ENCODE measurements at regions of chr12 and their contacts with region 1.

Region 1: GRCh38 chr12:121209624-121210572 is at the start of gene P2RX4:
- DNase-seq: peak; percentile 78 to 97 (median 84)
- ATAC-seq: peak; percentile 86
- H3K4me3 ChIP-seq: peak within 1 kb of the TSS; percentile 84
- H3K4me3 Mint-ChIP-seq: peak within 1 kb of the TSS; percentile 84
- H3K27ac ChIP-seq: peak within 1 kb of the TSS; percentile 89
- H3K27ac Mint-ChIP-seq: peak within 1 kb of the TSS; percentile 88
- H3K4me1 ChIP-seq: peaks cover 41% of the 10 kb centered on the region
- H3K4me1 Mint-ChIP-seq: peaks cover 18% of the 10 kb centered on the region
- H3K27me3 ChIP-seq: no peaks in the 10 kb centered on the region
- H3K27me3 Mint-ChIP-seq: no peaks in the 10 kb centered on the region
- CTCF ChIP-seq: peak; percentile 47
- total RNA-seq, gene P2RX4: 36.2 to 37.4 TPM

Region 2: GRCh38 chr12:121128970-121129810 is 80.7 kb before region 1 on chr12:
- CTCF ChIA-PET with region 1: no interaction called
- POLR2A ChIA-PET with region 1: interaction called, 4 read pairs
- intact Hi-C with region 1: loop called (anchors 5 to 10 kb)
- DNase-seq: peak; percentile 56 to 93 (median 74)
- ATAC-seq: peak; percentile 86
- H3K4me3 ChIP-seq: peak overlapping the region; percentile 47
- H3K4me3 Mint-ChIP-seq: peak overlapping the region; percentile 89
- H3K27ac ChIP-seq: peak overlapping the region; percentile 77 to 81
- H3K27ac Mint-ChIP-seq: peak overlapping the region; percentile 83
- H3K4me1 ChIP-seq: peaks cover 61% of the 10 kb centered on the region
- H3K4me1 Mint-ChIP-seq: peaks cover 74% of the 10 kb centered on the region
- H3K27me3 ChIP-seq: no peaks in the 10 kb centered on the region
- H3K27me3 Mint-ChIP-seq: no peaks in the 10 kb centered on the region
- CTCF ChIP-seq: no peak

Region 3: DNA sequence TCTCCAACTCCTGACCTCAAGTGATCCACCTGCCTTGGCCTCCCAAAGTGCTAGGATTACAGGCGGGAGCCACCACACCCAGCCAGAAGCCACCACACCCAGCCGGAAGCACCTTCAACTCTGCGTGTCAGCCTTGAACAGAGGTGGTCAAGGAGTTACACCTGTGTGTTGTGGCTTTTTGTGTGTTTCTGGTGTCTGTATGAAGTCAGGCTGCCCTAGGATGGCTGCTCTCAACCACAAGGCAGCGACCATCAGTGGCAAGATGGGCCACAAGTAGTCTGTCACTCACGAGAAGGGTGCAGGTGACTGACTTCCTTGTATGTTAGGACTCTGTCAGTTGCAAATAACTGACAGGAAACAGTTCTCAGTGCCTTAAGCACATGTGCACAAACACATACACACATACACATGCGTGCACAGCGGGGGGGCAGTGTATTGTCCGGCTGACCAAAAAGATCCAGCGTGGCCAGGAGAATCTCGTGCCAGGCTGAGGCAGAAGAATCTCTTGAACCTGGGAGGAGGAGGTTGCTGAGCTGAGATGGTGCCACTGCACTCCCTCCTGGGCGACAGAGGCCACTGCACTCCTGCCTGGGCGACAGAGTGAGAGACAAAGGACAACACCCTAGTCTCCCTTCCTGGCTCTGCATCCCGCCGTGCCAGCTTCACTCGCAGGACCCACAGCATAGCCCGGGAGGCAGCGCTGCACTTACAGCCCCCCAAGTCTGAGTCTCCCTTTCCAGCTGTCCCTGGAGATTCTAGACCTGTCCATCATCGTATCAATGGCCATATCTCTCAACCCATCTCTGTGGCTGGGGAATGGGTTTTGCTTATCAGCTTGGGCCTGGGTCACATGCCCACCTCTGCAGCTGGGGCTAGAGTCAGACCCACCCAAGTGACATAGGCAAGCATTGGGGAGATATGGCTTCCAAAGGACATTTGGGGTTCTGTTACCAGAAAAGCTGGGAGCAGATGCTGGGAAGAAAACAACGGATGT is 13.7 kb after region 1 on chr12:
- CTCF ChIA-PET with region 1: interaction called, 5 read pairs
- POLR2A ChIA-PET with region 1: interaction called, 20 read pairs
- intact Hi-C with region 1: loop called (anchors 2 kb)
- DNase-seq: peak in 10 of 14 experiments; percentile 23 to 72 (median 46)
- ATAC-seq: peak; percentile 53
- H3K4me3 ChIP-seq: no peak overlapping the region
- H3K4me3 Mint-ChIP-seq: peak overlapping the region; percentile 55
- H3K27ac ChIP-seq: peak overlapping the region; percentile 48 to 79
- H3K27ac Mint-ChIP-seq: peak overlapping the region; percentile 88
- H3K4me1 ChIP-seq: peaks cover 58% of the 10 kb centered on the region
- H3K4me1 Mint-ChIP-seq: peaks cover 47% of the 10 kb centered on the region
- H3K27me3 ChIP-seq: no peaks in the 10 kb centered on the region
- H3K27me3 Mint-ChIP-seq: no peaks in the 10 kb centered on the region
- CTCF ChIP-seq: no peak

Region 4: GRCh38 chr12:121240484-121241101 is 30.7 kb after region 1 on chr12:
- CTCF ChIA-PET with region 1: no interaction called
- POLR2A ChIA-PET with region 1: interaction called, 11 read pairs
- intact Hi-C with region 1: loop called (anchors 1 kb)
- DNase-seq: peak; percentile 84 to 99 (median 92)
- ATAC-seq: peak; percentile 92
- H3K4me3 ChIP-seq: peak overlapping the region; percentile 47
- H3K4me3 Mint-ChIP-seq: peak overlapping the region; percentile 90
- H3K27ac ChIP-seq: peak overlapping the region; percentile 86 to 88
- H3K27ac Mint-ChIP-seq: peak overlapping the region; percentile 100
- H3K4me1 ChIP-seq: peaks cover 45% of the 10 kb centered on the region
- H3K4me1 Mint-ChIP-seq: peaks cover 51% of the 10 kb centered on the region
- H3K27me3 ChIP-seq: no peaks in the 10 kb centered on the region
- H3K27me3 Mint-ChIP-seq: no peaks in the 10 kb centered on the region
- CTCF ChIP-seq: no peak

Region 5: DNA sequence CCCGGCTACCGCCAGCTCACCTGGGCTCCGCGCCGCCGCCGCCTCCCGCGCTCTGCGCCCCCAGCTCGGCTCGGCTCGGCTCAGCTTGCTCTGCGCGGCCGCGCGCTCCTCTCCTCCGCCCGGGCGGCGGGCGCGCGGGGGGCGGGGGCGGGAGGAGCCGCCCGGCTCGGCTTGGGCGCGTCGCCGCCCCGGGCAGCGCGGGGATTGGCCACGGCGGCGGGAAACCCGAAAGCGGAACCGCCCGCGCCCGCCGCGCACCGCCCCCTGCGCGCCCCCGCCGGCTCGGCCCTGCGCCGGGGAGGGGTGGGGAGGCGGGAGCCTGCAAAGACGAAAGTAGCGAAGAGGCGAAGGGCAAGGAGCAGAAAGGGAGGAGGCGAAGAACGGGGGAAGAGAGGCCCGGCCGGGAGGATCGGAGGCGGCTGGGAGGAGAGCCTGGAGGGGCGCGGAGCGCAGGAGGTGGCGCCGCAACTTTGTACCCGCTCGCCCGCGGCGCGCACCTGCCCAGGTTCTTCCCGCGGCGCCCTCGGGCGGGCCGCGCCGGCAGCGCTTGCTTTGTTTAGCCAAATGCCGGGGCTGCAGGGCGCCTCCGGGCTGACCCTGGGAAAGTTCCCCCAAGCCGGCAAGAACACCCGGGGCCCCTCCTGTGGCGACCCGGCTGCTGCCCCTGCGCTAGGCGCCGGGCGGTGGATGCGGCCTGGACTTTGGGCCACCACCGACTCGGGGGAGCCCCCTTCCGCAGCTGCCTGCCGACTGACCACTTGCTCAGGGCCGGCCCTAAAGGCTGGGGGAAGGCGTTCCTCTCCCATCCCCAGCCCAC is 86.9 kb after region 1 on chr12 and contains the start of gene CAMKK2:
- CTCF ChIA-PET with region 1: no interaction called
- POLR2A ChIA-PET with region 1: no interaction called
- intact Hi-C with region 1: loop called (anchors 1 to 2 kb)
- DNase-seq: peak; percentile 73 to 96 (median 84)
- ATAC-seq: peak; percentile 88
- H3K4me3 ChIP-seq: peak within 1 kb of the TSS; percentile 83
- H3K4me3 Mint-ChIP-seq: peak within 1 kb of the TSS; percentile 92
- H3K27ac ChIP-seq: no peak within 1 kb of the TSS
- H3K27ac Mint-ChIP-seq: peak within 1 kb of the TSS; percentile 75
- H3K4me1 ChIP-seq: peaks cover 37% of the 10 kb centered on the region
- H3K4me1 Mint-ChIP-seq: peaks cover 13% of the 10 kb centered on the region
- H3K27me3 ChIP-seq: no peaks in the 10 kb centered on the region
- H3K27me3 Mint-ChIP-seq: no peaks in the 10 kb centered on the region
- CTCF ChIP-seq: peak; percentile 26
- total RNA-seq, gene CAMKK2: 6.7 to 6.8 TPM